ENCODE measurements at regions of chr7 and their contacts with region 1.

Region 1: DNA sequence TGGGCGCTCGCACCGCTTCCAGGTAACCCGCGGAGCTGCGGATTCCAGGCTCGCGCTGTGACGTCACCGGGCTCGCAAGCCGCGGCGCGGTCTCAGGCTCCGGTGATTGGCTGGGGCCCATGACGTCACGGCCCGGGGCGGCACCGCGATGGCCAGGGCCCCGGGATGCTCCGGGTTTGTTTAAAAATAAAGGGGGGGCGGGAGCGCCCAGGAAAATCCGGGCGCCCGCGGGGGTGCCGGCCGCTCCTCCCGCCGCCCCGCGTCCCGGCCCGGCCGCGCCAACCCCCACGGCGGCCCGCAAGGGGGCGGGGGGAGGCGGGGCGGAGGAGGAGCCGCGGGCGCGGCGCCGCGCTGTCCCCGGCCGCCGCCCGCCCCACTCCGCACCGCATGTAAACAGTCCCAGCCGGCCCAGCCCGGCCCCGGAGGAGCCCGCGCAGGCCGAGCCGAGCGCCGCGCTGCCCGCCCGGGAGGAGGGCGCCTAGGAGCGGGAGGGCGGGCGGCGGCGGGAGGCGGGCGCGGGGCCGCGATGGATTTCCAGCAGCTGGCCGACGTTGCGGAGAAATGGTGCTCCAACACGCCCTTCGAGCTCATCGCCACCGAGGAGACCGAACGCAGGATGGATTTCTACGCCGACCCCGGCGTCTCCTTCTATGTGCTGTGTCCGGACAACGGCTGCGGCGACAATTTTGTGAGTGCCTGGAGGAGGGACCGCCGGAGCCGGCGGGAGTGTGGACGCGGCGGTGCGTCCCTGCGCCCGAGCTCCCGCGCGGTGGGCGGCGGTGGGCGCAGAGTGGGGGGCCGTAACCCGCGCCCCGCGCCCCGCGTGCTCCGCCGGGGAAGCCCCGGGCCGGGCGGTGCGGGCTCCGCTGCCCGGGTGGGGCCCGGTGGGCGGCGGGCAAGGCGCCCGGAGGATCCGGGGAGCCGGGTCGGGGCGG is at the start of gene MTURN:
- DNase-seq: peak; percentile 80 to 91 (median 88)
- ATAC-seq: peak; percentile 89
- H3K4me3 ChIP-seq: peak within 1 kb of the TSS; percentile 86
- H3K4me3 Mint-ChIP-seq: peak within 1 kb of the TSS; percentile 87 to 95 (median 92)
- H3K27ac ChIP-seq: peak within 1 kb of the TSS; percentile 77
- H3K27ac Mint-ChIP-seq: peak within 1 kb of the TSS; percentile 65 to 95 (median 91)
- H3K4me1 ChIP-seq: peaks cover 0 to 8% of the 10 kb centered on the region in 2 donors
- H3K4me1 Mint-ChIP-seq: peaks cover 0 to 16% (median 6%) of the 10 kb centered on the region in 7 donors
- H3K27me3 ChIP-seq: no peaks in the 10 kb centered on the region
- H3K27me3 Mint-ChIP-seq: peaks cover 0 to 47% (median 0%) of the 10 kb centered on the region in 5 donors
- total RNA-seq, gene MTURN: 2.7 to 38.7 (median 20.2) TPM

Region 2: GRCh38 chr7:29609162-29610037 is 525.5 kb before region 1 on chr7:
- CTCF ChIA-PET with region 1: no interaction called
- POLR2A ChIA-PET with region 1: no interaction called
- intact Hi-C with region 1: no loop called
- DNase-seq: no peak
- ATAC-seq: no peak
- H3K4me3 ChIP-seq: no peak overlapping the region
- H3K4me3 Mint-ChIP-seq: no peak overlapping the region
- H3K27ac ChIP-seq: no peak overlapping the region
- H3K27ac Mint-ChIP-seq: no peak overlapping the region
- H3K4me1 ChIP-seq: no peaks in the 10 kb centered on the region
- H3K4me1 Mint-ChIP-seq: no peaks in the 10 kb centered on the region
- H3K27me3 ChIP-seq: no peaks in the 10 kb centered on the region
- H3K27me3 Mint-ChIP-seq: peaks cover 0 to 29% (median 6%) of the 10 kb centered on the region in 5 donors

Region 3: GRCh38 chr7:30074422-30075030 is 60.4 kb before region 1 on chr7:
- CTCF ChIA-PET with region 1: no interaction called
- POLR2A ChIA-PET with region 1: no interaction called
- intact Hi-C with region 1: loop called in 1 of 2 experiments (anchors 2 kb)
- DNase-seq: peak in 3 of 9 donors; percentile 4 to 16 (median 11)
- ATAC-seq: no peak
- H3K4me3 ChIP-seq: no peak overlapping the region
- H3K4me3 Mint-ChIP-seq: no peak overlapping the region
- H3K27ac ChIP-seq: no peak overlapping the region
- H3K27ac Mint-ChIP-seq: no peak overlapping the region
- H3K4me1 ChIP-seq: no peaks in the 10 kb centered on the region
- H3K4me1 Mint-ChIP-seq: no peaks in the 10 kb centered on the region
- H3K27me3 ChIP-seq: no peaks in the 10 kb centered on the region
- H3K27me3 Mint-ChIP-seq: no peaks in the 10 kb centered on the region

Region 4: DNA sequence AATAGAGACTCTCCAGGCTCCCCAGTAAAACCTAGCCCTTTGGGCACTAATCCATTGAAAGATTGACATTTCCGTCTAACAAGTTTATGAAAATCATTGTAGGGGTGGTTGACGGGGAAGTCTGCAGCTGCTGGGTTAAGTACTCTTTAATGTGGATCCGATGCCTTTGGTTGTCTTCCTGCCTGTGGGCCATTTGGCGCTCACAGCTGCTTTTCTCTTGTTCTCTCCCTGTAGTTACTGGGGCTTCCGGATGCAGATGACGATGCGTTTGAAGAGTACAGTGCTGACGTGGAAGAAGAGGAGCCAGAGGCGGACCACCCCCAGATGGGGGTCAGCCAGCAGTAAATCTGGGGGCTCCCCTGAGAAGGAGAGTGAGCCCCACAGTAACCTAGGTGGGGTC is 22.3 kb after region 1 on chr7:
- CTCF ChIA-PET with region 1: no interaction called
- POLR2A ChIA-PET with region 1: interaction called, 7 read pairs
- intact Hi-C with region 1: loop called (anchors 2 kb)
- DNase-seq: peak in 7 of 9 donors; percentile 52 to 76 (median 71)
- ATAC-seq: peak; percentile 82
- H3K4me3 ChIP-seq: no peak overlapping the region
- H3K4me3 Mint-ChIP-seq: peak overlapping the region; percentile 10 to 82 (median 58)
- H3K27ac ChIP-seq: no peak overlapping the region
- H3K27ac Mint-ChIP-seq: peak overlapping the region; percentile 1 to 73 (median 41)
- H3K4me1 ChIP-seq: peaks cover 0 to 26% of the 10 kb centered on the region in 2 donors
- H3K4me1 Mint-ChIP-seq: peaks cover 23 to 56% (median 42%) of the 10 kb centered on the region in 7 donors
- H3K27me3 ChIP-seq: no peaks in the 10 kb centered on the region
- H3K27me3 Mint-ChIP-seq: no peaks in the 10 kb centered on the region

Region 5: GRCh38 chr7:30504347-30505173 is 369.7 kb after region 1 on chr7 and contains the start of gene GGCT:
- CTCF ChIA-PET with region 1: no interaction called
- POLR2A ChIA-PET with region 1: no interaction called
- intact Hi-C with region 1: loop called (anchors 2 to 10 kb)
- DNase-seq: peak; percentile 88 to 97 (median 95)
- ATAC-seq: peak; percentile 99
- H3K4me3 ChIP-seq: peak within 1 kb of the TSS; percentile 91
- H3K4me3 Mint-ChIP-seq: peak within 1 kb of the TSS; percentile 90 to 96 (median 95)
- H3K27ac ChIP-seq: peak within 1 kb of the TSS; percentile 72
- H3K27ac Mint-ChIP-seq: peak within 1 kb of the TSS; percentile 87 to 99 (median 91)
- H3K4me1 ChIP-seq: peaks cover 12% of the 10 kb centered on the region in 2 donors
- H3K4me1 Mint-ChIP-seq: peaks cover 19 to 51% (median 44%) of the 10 kb centered on the region in 7 donors
- H3K27me3 ChIP-seq: no peaks in the 10 kb centered on the region
- H3K27me3 Mint-ChIP-seq: no peaks in the 10 kb centered on the region
- total RNA-seq, gene GGCT: 9.5 to 39.2 (median 10.8) TPM

Region 6: DNA sequence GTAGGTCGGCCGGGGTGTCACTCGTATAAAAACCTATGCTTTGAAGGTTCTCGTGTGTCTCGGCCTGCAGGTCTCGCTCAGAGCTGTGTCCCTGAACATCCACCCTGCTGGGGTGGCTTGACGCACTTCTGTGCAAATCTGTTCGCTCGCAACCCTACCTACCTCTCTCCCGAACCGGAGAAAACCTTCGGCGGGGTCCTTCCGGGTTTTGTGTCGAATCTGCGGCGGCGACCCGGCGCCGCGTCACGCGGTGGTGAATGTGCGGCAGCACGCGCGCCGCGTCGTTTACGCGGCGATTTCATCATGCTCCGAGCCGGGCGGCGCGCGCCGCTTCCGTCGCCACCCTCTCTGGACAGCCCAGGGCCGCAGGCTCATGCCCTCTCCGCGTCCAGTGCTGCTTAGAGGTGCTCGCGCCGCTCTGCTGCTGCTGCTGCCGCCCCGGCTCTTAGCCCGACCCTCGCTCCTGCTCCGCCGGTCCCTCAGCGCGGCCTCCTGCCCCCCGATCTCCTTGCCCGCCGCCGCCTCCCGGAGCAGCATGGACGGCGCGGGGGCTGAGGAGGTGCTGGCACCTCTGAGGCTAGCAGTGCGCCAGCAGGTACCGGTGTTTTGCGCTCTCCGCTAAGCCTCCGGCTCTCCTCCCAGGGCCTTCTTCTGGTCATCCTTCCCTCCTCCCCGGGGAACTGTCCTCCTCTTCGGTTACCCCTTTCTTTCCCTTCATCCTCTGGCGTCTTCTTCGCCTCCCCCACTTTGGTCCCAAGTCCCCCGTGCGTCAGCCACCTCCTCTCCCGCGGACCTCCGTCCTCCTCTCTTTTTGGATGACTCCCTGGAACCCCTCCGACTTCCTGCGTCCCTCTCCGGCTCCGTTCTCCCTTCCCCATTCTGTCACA is 459.9 kb after region 1 on chr7 and contains the start of gene GARS1:
- CTCF ChIA-PET with region 1: no interaction called
- POLR2A ChIA-PET with region 1: no interaction called
- intact Hi-C with region 1: loop called (anchors 1 to 5 kb)
- DNase-seq: peak; percentile 85 to 92 (median 90)
- ATAC-seq: peak; percentile 91
- H3K4me3 ChIP-seq: peak within 1 kb of the TSS; percentile 62
- H3K4me3 Mint-ChIP-seq: peak within 1 kb of the TSS; percentile 91 to 100 (median 99)
- H3K27ac ChIP-seq: peak within 1 kb of the TSS; percentile 91
- H3K27ac Mint-ChIP-seq: peak within 1 kb of the TSS; percentile 97 to 100 (median 99)
- H3K4me1 ChIP-seq: peaks cover 3 to 22% of the 10 kb centered on the region in 2 donors
- H3K4me1 Mint-ChIP-seq: peaks cover 52 to 88% (median 77%) of the 10 kb centered on the region in 7 donors
- H3K27me3 ChIP-seq: no peaks in the 10 kb centered on the region
- H3K27me3 Mint-ChIP-seq: no peaks in the 10 kb centered on the region
- total RNA-seq, gene GARS1: 73.8 to 143 (median 75.8) TPM

Region 7: GRCh38 chr7:30771174-30771879 is 636.4 kb after region 1 on chr7 and contains the start of gene MINDY4:
- CTCF ChIA-PET with region 1: no interaction called
- POLR2A ChIA-PET with region 1: no interaction called
- intact Hi-C with region 1: loop called in 1 of 2 experiments (anchors 1 kb)
- DNase-seq: peak; percentile 30 to 69 (median 52)
- ATAC-seq: peak; percentile 89
- H3K4me3 ChIP-seq: peak within 1 kb of the TSS; percentile 82
- H3K4me3 Mint-ChIP-seq: peak within 1 kb of the TSS; percentile 68 to 94 (median 88)
- H3K27ac ChIP-seq: peak within 1 kb of the TSS; percentile 71
- H3K27ac Mint-ChIP-seq: peak within 1 kb of the TSS; percentile 51 to 83 (median 70)
- H3K4me1 ChIP-seq: no peaks in the 10 kb centered on the region
- H3K4me1 Mint-ChIP-seq: peaks cover 0 to 12% (median 6%) of the 10 kb centered on the region in 7 donors
- H3K27me3 ChIP-seq: no peaks in the 10 kb centered on the region
- H3K27me3 Mint-ChIP-seq: peaks cover 0 to 9% (median 0%) of the 10 kb centered on the region in 5 donors
- total RNA-seq, gene MINDY4: 0.82 to 1.5 (median 0.94) TPM

Measured in naive thymus-derived CD4-positive, alpha-beta T cell (primary cell).